Endothelial cell of umbilical vein (primary cell): ENCODE measurements at regions of chr7 and their contacts with region 1.

Region 1: DNA sequence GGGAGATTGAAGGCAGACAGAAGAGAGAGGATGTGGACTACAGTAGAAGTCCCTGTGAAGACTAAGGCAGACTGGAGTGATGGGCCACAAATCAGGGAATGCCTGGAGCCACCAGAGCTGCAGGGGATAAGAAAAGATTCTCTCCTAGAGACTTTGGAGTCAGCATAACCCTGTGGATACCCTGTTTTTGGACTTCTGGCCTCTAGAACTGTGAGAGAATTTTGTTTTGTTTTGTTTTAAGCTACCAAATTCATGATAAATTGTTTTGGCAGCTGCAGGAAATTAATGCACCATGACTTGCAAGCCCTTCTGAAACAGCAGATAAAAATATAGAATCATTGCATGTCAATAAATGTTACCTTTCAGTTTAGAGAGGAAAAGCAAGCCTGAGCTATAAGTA is 41.3 kb downstream of the INHBA start:
- DNase-seq: peak; percentile 41
- H3K4me3 ChIP-seq: no peak overlapping the region
- H3K27ac ChIP-seq: no peak overlapping the region
- H3K4me1 ChIP-seq: peaks cover under 1% of the 10 kb centered on the region
- H3K27me3 ChIP-seq: no peaks in the 10 kb centered on the region
- CTCF ChIP-seq: no peak
- POLR2A ChIP-seq: no peak

Region 2: GRCh38 chr7:41679566-41679965 is 18.0 kb after region 1 on chr7:
- CTCF ChIA-PET with region 1: interaction called, 11 read pairs
- POLR2A ChIA-PET with region 1: no interaction called
- dilution Hi-C with region 1: no loop called
- intact Hi-C with region 1: no loop called
- DNase-seq: no peak
- H3K4me3 ChIP-seq: no peak overlapping the region
- H3K27ac ChIP-seq: no peak overlapping the region
- H3K4me1 ChIP-seq: no peaks in the 10 kb centered on the region
- H3K27me3 ChIP-seq: no peaks in the 10 kb centered on the region
- CTCF ChIP-seq: no peak
- POLR2A ChIP-seq: no peak